GM10248 (cell line): ENCODE measurements at regions of chr3 and their contacts with region 1.

Region 1: DNA sequence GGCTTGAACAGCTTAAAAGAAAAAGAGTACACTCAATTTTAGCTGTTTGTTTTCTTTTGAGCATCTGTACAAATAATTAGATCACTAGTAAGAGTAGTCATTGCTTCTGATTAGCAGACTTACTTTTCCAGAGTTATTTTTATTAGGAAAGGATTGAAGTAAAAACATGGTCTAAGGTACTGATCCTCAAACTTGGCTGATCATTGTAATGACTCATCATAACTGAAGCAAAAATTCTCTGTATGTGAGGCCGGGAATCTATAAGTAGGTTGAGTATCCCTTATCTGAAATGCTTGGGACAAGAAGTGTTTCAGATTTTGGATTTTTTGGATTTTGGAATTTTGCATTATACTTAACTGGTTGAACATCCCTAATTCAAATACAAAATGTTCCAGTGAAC is 12.4 kb downstream of the NMD3 start:
- DNase-seq: no peak
- CTCF ChIP-seq: no peak

Region 2: DNA sequence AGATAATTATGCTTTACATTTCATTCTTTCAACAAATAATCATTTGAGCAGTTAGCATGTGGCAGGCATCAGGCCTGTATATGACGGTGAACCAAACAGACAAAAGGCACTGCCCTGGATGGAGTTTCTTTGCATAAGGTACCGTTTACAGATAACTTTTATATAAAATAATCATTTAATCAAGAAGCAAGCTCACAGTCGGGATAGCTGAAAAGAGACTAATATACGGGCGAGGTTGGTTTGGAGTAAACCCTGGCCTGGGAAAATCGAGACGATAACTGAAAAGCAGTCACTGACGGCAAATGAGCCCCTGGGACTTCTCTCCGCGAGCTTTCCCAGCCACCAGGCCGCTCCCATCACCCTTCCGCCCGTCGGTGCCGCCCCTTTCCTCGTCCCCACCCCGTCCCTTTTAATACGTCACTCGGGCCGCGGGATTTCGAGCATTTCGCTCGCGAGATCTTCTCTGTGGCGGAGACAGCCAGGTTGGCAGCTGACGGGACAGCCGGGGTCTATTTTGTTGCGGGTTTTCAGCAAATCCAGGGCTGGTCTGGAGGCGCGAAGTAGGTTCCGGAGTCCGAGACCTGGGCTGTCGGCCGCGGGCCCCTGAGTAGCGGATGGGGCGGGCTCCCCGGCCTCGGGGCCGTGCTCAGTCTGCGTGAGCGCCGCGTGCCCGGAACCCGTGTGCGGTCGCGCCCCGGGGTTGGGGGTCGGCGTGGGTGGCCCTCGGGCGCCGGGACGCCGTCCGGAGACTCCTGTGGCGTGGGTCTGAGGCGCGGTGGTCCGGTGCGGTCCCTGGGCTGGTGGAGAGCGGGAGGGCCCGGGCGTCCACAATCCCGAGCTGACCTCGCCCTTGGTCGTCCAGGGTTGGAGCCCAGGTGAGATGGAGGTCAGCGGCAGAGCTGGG is 12.5 kb before region 1 on chr3 and contains the start of gene NMD3:
- CTCF ChIA-PET with region 1: interaction called, 16 read pairs
- POLR2A ChIA-PET with region 1: interaction called, 6 read pairs
- DNase-seq: peak; percentile 94
- CTCF ChIP-seq: no peak

Region 3: GRCh38 chr3:161263057-161263456 is 29.5 kb after region 1 on chr3:
- CTCF ChIA-PET with region 1: no interaction called
- POLR2A ChIA-PET with region 1: no interaction called
- DNase-seq: no peak
- CTCF ChIP-seq: no peak